Activated CD8-positive, alpha-beta T cell treated with anti-CD3 and anti-CD28 coated beads, Interleukin-2, amount 10 ng/mL, durations not matched to agents 7 days and 5 days (primary cell): ENCODE measurements at regions of chr10 and their contacts with region 1.

Region 1: DNA sequence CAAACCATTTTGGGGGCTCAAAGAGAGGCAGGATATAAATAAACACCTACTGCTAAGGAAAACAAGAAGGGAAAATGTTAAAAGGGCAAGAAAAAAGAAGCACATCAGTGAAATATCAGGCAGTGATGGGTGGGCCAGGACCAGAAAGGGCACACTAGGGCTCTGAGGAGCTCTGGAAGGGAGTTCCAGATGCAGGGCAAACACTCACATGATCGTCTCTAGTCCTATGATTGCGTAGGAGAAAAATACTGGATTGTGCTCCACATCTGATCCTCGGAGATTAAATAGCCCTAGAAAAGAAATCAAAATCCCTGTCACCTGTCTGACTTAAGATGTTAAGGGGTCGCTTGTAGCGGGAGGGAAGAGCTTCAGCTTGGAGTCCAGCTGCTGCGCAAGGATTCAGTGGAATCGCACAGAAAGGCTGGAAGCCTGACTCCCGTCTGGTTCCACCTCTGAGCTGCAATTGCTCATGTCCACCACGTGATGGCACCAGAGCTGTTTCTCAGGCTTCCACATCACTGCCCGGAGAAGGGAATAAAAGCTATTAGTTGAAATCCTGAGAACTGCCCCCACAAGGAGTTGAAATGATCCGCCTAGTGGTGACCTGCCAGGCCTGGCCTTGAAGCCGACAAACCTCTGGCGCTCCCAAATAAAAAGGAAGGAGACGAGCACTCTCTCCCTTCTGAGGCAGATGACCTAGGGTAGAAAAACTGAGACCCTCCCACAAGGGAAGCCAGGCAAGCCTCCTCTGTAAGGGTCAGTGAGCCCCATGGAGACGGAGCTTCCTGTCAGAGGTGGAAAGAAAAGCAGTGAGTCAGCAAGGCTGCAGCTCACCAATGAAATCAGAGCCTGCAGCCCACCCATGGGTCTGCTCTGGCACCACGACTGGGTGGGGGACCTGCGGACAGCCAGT is 39.2 kb downstream of the XPNPEP1 start:
- DNase-seq: peak; percentile 67
- ATAC-seq: peak; percentile 78
- H3K4me3 Mint-ChIP-seq: no peak overlapping the region
- H3K27ac Mint-ChIP-seq: peak overlapping the region; percentile 64
- H3K4me1 Mint-ChIP-seq: peaks cover 23% of the 10 kb centered on the region
- H3K27me3 Mint-ChIP-seq: no peaks in the 10 kb centered on the region

Region 2: DNA sequence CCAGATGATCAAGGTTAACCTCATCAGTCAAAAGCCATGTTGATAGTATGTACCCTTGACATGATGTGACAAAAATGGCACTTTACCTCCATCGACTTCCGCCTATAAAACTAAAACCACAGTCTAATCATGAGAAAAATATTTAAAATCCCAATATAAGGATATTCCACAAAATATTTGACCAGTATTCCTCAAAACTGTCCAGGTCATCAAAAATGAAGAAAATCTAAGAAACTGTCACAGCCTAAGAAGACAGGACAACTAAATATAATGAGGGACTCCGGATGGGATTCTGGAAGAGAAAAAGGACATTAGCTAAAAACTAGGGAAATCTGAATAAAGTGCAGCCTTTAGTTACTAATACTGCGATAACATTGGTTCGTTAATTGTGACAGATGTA is 28.4 kb before region 1 on chr10:
- CTCF ChIA-PET with region 1: no interaction called
- POLR2A ChIA-PET with region 1: no interaction called
- DNase-seq: no peak
- ATAC-seq: no peak
- H3K4me3 Mint-ChIP-seq: no peak overlapping the region
- H3K27ac Mint-ChIP-seq: no peak overlapping the region
- H3K4me1 Mint-ChIP-seq: peaks cover 17% of the 10 kb centered on the region
- H3K27me3 Mint-ChIP-seq: no peaks in the 10 kb centered on the region

Region 3: DNA sequence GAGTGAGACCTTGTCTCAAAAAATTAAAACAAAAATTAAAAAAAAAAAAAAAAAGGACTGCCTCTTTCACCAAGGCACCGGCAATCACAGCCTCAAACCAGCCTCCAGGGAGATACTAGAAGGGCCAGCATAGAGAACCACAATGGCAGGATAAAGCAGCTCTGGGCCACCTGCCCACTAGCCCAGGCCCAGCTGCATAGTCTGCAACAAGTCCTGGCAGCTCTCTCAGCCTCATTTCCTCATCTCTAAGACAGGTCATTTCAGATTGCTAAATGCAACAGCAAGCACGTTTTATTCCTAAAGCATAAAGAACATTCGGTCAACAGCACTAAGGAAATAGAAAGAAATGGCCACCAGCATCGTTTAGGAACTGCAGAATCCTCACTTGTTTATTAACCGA is 10.4 kb after region 1 on chr10:
- CTCF ChIA-PET with region 1: interaction called, 30 read pairs
- POLR2A ChIA-PET with region 1: interaction called, 3 read pairs
- DNase-seq: no peak
- ATAC-seq: no peak
- H3K4me3 Mint-ChIP-seq: no peak overlapping the region
- H3K27ac Mint-ChIP-seq: no peak overlapping the region
- H3K4me1 Mint-ChIP-seq: peaks cover 48% of the 10 kb centered on the region
- H3K27me3 Mint-ChIP-seq: no peaks in the 10 kb centered on the region

Region 4: DNA sequence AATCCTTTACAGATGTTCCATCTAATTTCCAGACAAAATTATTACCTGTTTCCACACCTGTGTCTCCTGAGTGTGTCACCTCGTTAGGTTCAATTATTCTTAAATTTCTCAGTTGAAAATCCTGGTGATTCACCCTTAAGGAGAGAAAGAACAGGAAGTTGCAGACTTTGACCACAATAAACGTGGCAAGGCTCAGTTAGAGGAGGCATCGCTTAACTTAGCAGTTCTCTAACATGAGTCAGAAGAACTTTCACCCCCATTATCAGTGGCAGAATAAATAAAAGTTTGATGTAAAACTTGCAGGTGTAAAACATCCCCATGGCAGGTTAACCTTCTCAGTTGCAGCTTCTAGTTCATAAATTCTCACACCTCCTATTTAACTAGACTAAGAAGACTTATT is 30.9 kb after region 1 on chr10:
- CTCF ChIA-PET with region 1: interaction called, 41 read pairs
- POLR2A ChIA-PET with region 1: interaction called, 3 read pairs
- DNase-seq: peak; percentile 67
- ATAC-seq: peak; percentile 83
- H3K4me3 Mint-ChIP-seq: peak overlapping the region; percentile 58
- H3K27ac Mint-ChIP-seq: peak overlapping the region; percentile 85
- H3K4me1 Mint-ChIP-seq: peaks cover 91% of the 10 kb centered on the region
- H3K27me3 Mint-ChIP-seq: no peaks in the 10 kb centered on the region

Region 5: DNA sequence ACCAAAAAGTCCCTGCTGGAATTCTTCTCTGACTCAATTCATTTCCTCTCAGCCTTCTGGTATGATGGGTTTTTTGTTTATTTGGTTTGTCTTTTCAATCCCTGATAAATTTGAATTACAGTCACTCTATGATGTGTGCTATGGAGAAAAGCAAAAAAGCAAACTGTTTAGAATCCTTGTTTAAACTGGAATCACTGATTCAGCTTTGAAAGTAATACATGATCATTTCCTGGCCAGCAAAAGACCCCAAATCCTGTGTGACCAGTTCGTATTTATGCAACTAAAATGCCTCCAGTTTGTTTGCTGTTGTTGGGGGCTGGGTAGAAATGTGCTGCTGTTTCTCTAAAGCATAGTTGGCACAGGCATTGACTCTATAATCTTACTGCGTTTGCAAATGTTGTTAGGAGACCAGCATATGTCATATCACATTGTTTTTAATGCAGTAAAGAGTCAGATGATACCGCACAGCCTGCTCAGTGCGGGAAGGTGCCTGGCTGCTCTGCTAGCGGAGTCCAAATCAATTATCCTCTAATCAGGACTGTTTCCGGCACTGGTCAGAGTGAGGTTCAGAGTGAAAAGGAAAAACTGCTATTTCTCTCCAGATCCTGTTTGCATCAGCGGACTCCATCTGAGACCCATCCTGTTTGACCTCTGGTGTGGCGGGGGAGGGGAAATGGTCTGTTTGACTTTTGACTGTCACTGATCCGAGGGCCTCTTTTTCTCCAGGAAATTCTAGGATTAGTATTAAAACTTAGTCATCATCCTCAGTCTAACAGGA is 83.0 kb after region 1 on chr10:
- CTCF ChIA-PET with region 1: interaction called, 17 read pairs
- POLR2A ChIA-PET with region 1: no interaction called
- DNase-seq: no peak
- ATAC-seq: no peak
- H3K4me3 Mint-ChIP-seq: no peak overlapping the region
- H3K27ac Mint-ChIP-seq: no peak overlapping the region
- H3K4me1 Mint-ChIP-seq: no peaks in the 10 kb centered on the region
- H3K27me3 Mint-ChIP-seq: peaks cover 2% of the 10 kb centered on the region

Region 6: DNA sequence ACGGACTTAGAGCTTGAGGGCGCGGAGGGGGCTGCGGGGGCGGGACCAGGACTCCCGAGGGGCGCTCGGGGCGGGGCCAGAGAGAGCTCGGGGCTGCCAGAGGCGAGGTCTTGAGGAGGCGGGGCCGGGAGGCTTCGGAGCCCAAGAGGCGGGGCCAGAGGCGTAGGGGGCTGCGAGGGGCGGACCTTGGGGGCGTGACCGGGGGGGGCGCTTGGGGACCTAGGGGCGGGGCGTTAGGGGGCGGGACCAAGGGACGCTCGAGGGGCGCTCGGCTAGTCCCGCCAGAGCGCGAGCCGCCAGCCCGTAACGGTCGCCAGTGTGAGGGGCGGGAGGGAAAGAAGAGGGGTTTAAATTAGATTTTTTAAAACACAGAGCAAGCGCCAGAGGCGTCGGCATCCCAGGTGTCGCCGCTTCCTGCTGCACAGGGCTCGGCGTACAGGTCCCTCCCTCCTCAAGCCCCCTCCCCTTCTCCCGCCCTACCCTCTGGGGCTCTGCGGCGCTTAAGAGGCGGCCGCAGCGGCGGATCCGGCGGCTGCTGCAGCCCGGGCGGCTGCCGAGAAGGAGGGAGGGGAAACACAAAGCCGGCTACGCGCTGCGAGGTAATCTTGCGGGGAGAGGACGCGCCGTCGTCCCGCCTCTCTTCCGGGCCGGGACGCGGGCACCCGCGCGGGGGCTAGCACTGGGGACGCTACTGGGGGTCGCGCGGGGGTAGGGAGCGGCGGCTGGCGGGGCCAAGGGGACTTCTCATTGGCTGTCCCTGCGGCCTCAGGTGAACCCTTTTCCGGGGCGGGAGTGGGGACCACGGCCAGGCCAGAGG is 123.8 kb after region 1 on chr10 and contains the start of gene ADD3:
- CTCF ChIA-PET with region 1: interaction called, 18 read pairs
- POLR2A ChIA-PET with region 1: no interaction called
- DNase-seq: peak; percentile 95
- ATAC-seq: peak; percentile 76
- H3K4me3 Mint-ChIP-seq: no peak within 1 kb of the TSS
- H3K27ac Mint-ChIP-seq: peak within 1 kb of the TSS; percentile 94
- H3K4me1 Mint-ChIP-seq: peaks cover 37% of the 10 kb centered on the region
- H3K27me3 Mint-ChIP-seq: no peaks in the 10 kb centered on the region
- total RNA-seq, gene ADD3: 172 to 200 TPM

Region 7: GRCh38 chr10:110118891-110119621 is 234.9 kb after region 1 on chr10:
- CTCF ChIA-PET with region 1: interaction called, 10 read pairs
- POLR2A ChIA-PET with region 1: no interaction called
- DNase-seq: no peak
- ATAC-seq: no peak
- H3K4me3 Mint-ChIP-seq: no peak overlapping the region
- H3K27ac Mint-ChIP-seq: no peak overlapping the region
- H3K4me1 Mint-ChIP-seq: no peaks in the 10 kb centered on the region
- H3K27me3 Mint-ChIP-seq: no peaks in the 10 kb centered on the region